ENCODE measurements at regions of chr1 and their contacts with region 1.

Region 1: DNA sequence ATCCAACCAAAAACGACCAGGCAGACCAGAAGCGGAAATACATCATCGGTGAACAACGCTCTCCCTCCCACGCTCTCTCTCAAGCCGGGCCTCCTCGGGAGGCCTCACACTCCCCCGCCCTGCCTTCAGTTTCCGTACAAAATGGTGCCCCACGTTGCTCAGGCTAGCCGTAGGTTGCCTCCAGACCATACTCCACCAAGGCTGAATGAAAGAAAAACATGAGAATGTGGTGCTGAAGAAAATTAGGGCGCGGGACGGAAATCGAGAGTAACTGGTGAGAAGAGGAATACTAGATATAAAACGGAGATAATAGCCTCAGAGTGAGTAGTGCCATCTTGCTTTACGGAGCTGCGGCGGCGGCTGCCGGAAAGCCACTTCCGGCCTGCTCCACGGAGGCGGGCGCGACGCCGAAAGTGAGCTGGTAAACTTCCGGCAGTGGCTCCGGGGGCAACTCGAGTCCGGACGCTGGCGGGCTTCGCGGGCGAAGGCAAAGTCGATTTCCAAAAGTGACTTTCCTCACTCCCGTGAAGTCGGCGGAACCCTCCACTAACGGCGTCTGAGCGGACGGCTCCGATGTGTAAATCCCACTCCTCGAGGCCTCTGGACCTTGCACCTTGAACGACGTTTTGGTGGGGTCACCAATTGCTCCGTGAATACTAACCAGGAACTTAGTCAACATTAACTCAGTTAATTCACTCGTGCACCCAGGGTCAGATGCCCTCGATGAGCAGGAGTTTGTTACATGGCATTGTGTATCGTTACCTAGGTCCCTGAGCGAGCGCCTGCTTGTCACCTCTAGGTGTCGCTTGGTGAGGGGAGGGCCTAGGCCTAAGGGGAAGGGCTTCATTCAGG is at the start of gene SH3BP5L:
- DNase-seq: peak; percentile 93 to 96 (median 94)
- H3K4me3 ChIP-seq: peak within 1 kb of the TSS; percentile 97 to 99
- H3K4me3 Mint-ChIP-seq: peak within 1 kb of the TSS; percentile 94 to 100 (median 97)
- H3K27ac ChIP-seq: peak within 1 kb of the TSS; percentile 91
- H3K27ac Mint-ChIP-seq: peak within 1 kb of the TSS; percentile 93 to 100 (median 99)
- H3K4me1 ChIP-seq: peaks cover 53% of the 10 kb centered on the region
- H3K4me1 Mint-ChIP-seq: peaks cover 37 to 60% (median 51%) of the 10 kb centered on the region in 4 donors
- H3K27me3 ChIP-seq: no peaks in the 10 kb centered on the region
- H3K27me3 Mint-ChIP-seq: peaks cover 0 to 1% of the 10 kb centered on the region in 2 donors
- total RNA-seq, gene SH3BP5L: 40.9 to 43.4 TPM

Region 2: DNA sequence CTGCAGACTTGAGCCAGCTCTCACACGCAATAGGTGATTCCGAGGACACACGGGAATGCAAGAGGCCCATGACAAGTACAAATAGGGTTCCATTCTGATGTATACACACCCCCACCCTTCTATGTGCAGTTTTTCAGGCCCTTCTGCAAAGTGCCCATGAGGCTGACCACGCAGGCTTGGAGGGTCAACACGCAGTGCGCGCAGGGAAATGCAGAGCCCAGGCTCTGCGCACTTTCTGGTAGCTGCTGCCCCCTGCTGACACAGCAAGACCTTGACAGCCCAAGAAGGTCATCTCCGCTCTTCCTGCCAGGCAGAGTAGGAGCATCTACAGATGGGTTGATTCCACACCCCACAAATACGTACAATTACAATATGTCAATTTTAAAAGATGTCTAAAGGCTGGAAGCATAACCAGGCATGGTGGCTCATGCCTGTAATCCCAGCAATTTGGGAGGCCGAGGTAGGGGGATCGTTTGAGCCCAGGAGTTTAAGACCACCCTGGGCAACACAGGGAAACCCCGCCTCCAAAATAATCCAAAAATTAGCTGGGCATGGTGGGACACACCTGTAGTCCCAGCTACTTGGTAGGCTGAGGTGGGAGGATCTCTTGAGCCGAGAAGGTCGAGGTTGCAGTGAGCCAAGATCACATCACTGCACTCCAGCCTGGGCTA is 18.9 kb before region 1 on chr1:
- CTCF ChIA-PET with region 1: no interaction called
- POLR2A ChIA-PET with region 1: no interaction called
- intact Hi-C with region 1: no loop called
- DNase-seq: peak in 4 of 5 donors; percentile 35 to 48 (median 42)
- H3K4me3 ChIP-seq: no peak overlapping the region
- H3K4me3 Mint-ChIP-seq: no peak overlapping the region
- H3K27ac ChIP-seq: no peak overlapping the region
- H3K27ac Mint-ChIP-seq: peak overlapping the region in 2 of 7 donors; percentile 4 to 73
- H3K4me1 ChIP-seq: no peaks in the 10 kb centered on the region
- H3K4me1 Mint-ChIP-seq: peaks cover 0 to 6% (median 3%) of the 10 kb centered on the region in 4 donors
- H3K27me3 ChIP-seq: no peaks in the 10 kb centered on the region
- H3K27me3 Mint-ChIP-seq: peaks cover 7 to 8% of the 10 kb centered on the region in 2 donors

Region 3: DNA sequence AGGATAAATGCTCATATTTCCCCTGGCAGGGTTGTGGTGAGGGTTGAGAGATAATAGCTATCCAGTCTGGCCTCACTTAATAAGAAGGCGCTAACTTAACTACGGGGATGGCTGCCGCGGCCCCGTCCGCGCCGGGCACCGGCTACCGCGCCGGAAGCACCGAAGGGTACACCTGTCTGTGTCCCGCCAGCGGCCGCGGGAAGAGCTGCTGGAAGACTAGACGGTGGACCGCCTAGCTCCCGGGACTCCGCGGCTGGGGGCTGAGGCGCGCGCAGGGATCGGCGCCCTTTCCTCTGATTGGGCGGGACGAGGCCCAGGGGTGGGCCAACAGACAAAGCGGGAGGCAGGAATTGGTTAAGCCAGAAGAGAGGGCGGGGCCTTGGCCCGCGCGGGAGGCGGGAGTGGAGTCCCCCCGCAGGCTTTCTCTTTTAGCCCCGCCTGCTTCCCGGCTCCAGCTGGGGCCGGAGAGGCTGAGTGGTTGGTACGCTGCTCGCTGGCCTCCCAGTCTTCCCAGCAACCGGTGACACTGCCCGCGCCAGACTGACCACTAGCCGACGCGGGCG is 11.7 kb after region 1 on chr1 and contains the start of gene ZNF672:
- CTCF ChIA-PET with region 1: interaction called, 58 read pairs
- POLR2A ChIA-PET with region 1: interaction called, 154 read pairs
- intact Hi-C with region 1: loop called (anchors 1 kb)
- DNase-seq: peak; percentile 92 to 95 (median 93)
- H3K4me3 ChIP-seq: peak within 1 kb of the TSS; percentile 64 to 87
- H3K4me3 Mint-ChIP-seq: peak within 1 kb of the TSS in 2 of 8 donors; percentile 95 to 99
- H3K27ac ChIP-seq: peak within 1 kb of the TSS; percentile 97
- H3K27ac Mint-ChIP-seq: peak within 1 kb of the TSS in 6 of 7 donors; percentile 96 to 99 (median 99)
- H3K4me1 ChIP-seq: peaks cover 36% of the 10 kb centered on the region
- H3K4me1 Mint-ChIP-seq: peaks cover 13 to 36% (median 24%) of the 10 kb centered on the region in 4 donors
- H3K27me3 ChIP-seq: no peaks in the 10 kb centered on the region
- H3K27me3 Mint-ChIP-seq: peaks cover 3 to 4% of the 10 kb centered on the region in 2 donors
- total RNA-seq, gene ZNF672: 39.7 to 42.8 TPM

Region 4: GRCh38 chr1:248858891-248859889 is 33.1 kb after region 1 on chr1 and contains the start of gene ZNF692:
- CTCF ChIA-PET with region 1: interaction called, 27 read pairs
- POLR2A ChIA-PET with region 1: interaction called, 60 read pairs
- intact Hi-C with region 1: loop called (anchors 1 kb)
- DNase-seq: peak; percentile 97 to 98 (median 97)
- H3K4me3 ChIP-seq: peak within 1 kb of the TSS; percentile 66 to 81
- H3K4me3 Mint-ChIP-seq: peak within 1 kb of the TSS; percentile 84 to 93 (median 89)
- H3K27ac ChIP-seq: peak within 1 kb of the TSS; percentile 58
- H3K27ac Mint-ChIP-seq: peak within 1 kb of the TSS; percentile 88 to 98 (median 97)
- H3K4me1 ChIP-seq: peaks cover 58% of the 10 kb centered on the region
- H3K4me1 Mint-ChIP-seq: peaks cover 38 to 63% (median 45%) of the 10 kb centered on the region in 4 donors
- H3K27me3 ChIP-seq: no peaks in the 10 kb centered on the region
- H3K27me3 Mint-ChIP-seq: no peaks in the 10 kb centered on the region
- total RNA-seq, gene ZNF692: 70.8 to 74.8 TPM

Region 5: DNA sequence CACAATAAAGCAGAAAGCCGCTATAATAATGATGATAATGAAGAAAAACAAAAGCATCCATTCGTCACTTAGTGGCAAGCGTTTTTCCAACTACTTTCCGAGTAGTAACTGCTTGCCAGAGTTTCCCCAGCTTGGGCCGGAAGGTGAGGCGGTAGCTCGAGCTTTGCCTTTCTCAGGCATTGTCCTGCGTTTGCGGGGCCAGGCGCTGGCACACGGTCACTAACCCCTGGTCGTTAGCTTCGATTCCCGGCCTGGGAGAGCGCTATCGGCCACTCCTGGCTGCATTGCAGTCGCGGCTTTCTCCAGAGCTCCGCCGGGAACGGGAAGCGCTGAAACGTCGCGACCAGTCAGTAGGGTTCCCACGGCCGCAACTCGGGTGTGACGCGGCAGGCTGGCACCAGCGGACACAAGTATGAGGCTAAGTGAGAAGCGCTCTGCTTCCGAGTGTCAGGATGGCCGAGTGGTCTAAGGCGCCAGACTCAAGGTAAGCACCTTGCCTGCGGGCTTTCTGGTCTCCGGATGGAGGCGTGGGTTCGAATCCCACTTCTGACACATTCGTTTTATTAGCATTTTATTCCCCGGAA is 47.4 kb after region 1 on chr1:
- CTCF ChIA-PET with region 1: interaction called, 4 read pairs
- POLR2A ChIA-PET with region 1: interaction called, 28 read pairs
- intact Hi-C with region 1: loop called (anchors 1 kb)
- DNase-seq: peak; percentile 88 to 95 (median 92)
- H3K4me3 ChIP-seq: peak overlapping the region; percentile 79 to 91
- H3K4me3 Mint-ChIP-seq: peak overlapping the region; percentile 95 to 98 (median 97)
- H3K27ac ChIP-seq: peak overlapping the region; percentile 67
- H3K27ac Mint-ChIP-seq: peak overlapping the region; percentile 98 to 100 (median 99)
- H3K4me1 ChIP-seq: peaks cover 7% of the 10 kb centered on the region
- H3K4me1 Mint-ChIP-seq: peaks cover 11 to 32% (median 17%) of the 10 kb centered on the region in 4 donors
- H3K27me3 ChIP-seq: no peaks in the 10 kb centered on the region
- H3K27me3 Mint-ChIP-seq: peaks cover 8 to 12% of the 10 kb centered on the region in 2 donors

Region 6: GRCh38 chr1:248906009-248906752 is 80.0 kb after region 1 on chr1 and contains the start of gene PGBD2:
- CTCF ChIA-PET with region 1: interaction called, 4 read pairs
- POLR2A ChIA-PET with region 1: interaction called, 28 read pairs
- intact Hi-C with region 1: loop called (anchors 1 kb)
- DNase-seq: peak; percentile 90 to 93 (median 92)
- H3K4me3 ChIP-seq: peak within 1 kb of the TSS; percentile 45 to 80
- H3K4me3 Mint-ChIP-seq: peak within 1 kb of the TSS; percentile 96 to 98 (median 98)
- H3K27ac ChIP-seq: peak within 1 kb of the TSS; percentile 77
- H3K27ac Mint-ChIP-seq: peak within 1 kb of the TSS; percentile 92 to 99 (median 99)
- H3K4me1 ChIP-seq: peaks cover 28% of the 10 kb centered on the region
- H3K4me1 Mint-ChIP-seq: peaks cover 26 to 59% (median 35%) of the 10 kb centered on the region in 4 donors
- H3K27me3 ChIP-seq: no peaks in the 10 kb centered on the region
- H3K27me3 Mint-ChIP-seq: peaks cover 0 to 2% of the 10 kb centered on the region in 2 donors
- total RNA-seq, gene PGBD2: 18.3 to 19.6 TPM

Region 7: DNA sequence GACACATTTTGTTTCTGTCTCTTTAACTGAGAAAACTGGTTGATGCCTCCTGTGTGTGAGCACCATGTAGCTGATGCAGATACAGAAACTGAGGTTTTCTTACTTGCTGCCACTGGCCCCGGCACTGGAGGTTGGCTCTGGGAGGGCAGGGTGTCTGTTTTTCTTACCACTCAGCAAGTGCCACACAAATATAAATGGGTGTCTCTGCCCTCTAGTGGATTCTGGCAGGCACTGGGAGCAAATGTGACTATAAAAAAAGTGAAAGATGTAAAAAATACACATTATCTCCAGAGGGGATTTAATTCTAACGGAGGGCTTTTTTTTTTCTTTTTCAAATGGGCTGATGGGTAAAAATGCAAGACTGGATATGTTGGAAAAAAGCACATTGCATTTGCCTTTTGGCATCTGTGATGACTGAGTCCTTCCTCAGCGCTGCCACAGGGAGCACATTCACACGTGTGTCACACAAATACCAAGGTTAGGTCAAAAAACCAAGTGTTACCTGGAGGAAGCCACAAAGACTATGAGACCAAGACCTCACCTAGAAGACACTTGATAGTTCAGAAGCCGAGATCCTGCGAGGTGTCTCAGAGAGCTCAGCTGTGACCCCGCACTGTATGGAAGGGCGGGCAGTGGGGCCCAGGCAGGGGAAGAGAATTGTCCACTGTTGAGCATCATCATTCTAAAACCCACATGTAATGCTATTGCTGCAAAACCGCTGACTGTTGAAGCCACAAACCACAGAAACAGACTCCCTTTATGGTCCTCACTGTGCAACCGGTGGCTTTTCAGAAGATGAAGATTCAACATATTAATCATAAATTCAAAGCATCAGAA is 98.8 kb after region 1 on chr1:
- CTCF ChIA-PET with region 1: interaction called, 4 read pairs
- POLR2A ChIA-PET with region 1: no interaction called
- intact Hi-C with region 1: loop called (anchors 1 kb)
- DNase-seq: peak; percentile 58 to 67 (median 61)
- H3K4me3 ChIP-seq: no peak overlapping the region
- H3K4me3 Mint-ChIP-seq: peak overlapping the region in 7 of 8 donors; percentile 15 to 65 (median 33)
- H3K27ac ChIP-seq: no peak overlapping the region
- H3K27ac Mint-ChIP-seq: peak overlapping the region; percentile 5 to 84 (median 62)
- H3K4me1 ChIP-seq: peaks cover 13% of the 10 kb centered on the region
- H3K4me1 Mint-ChIP-seq: peaks cover 6 to 24% (median 18%) of the 10 kb centered on the region in 4 donors
- H3K27me3 ChIP-seq: no peaks in the 10 kb centered on the region
- H3K27me3 Mint-ChIP-seq: no peaks in the 10 kb centered on the region

Measured in CD4-positive, alpha-beta memory T cell (primary cell).